ENCODE measurements at regions of chr2 and their contacts with region 1.

Region 1: DNA sequence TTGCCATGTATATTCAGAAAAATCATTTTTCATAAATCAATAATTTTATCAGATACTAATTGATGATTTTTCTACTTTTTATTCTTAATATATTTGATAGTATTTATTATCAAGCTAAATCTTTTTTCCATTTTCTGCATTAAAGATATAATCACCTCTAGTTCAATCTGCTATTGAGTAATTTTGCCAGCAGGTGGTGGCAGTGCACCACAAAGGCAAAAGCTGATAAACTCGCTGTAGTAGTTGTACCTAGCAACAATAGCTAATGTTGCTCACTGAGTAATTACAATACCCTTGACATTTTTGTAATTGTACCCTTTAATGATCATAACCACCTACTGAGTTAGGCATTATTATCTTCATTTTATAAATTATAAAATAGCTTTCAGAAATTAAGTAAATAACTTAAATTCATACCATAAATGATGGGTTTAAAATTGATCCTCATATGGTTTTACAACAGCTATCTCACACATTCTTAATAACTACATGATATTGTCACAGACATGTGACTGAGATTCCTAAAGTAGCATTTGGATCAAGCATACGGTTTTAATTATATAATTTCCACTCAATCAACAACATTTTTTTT is 52.0 kb upstream of the CALCRL start:
- DNase-seq: no peak
- ATAC-seq: no peak
- H3K4me3 Mint-ChIP-seq: no peak overlapping the region
- H3K27ac Mint-ChIP-seq: no peak overlapping the region
- H3K4me1 Mint-ChIP-seq: no peaks in the 10 kb centered on the region
- H3K27me3 Mint-ChIP-seq: no peaks in the 10 kb centered on the region
- CTCF ChIP-seq: no peak

Region 2: DNA sequence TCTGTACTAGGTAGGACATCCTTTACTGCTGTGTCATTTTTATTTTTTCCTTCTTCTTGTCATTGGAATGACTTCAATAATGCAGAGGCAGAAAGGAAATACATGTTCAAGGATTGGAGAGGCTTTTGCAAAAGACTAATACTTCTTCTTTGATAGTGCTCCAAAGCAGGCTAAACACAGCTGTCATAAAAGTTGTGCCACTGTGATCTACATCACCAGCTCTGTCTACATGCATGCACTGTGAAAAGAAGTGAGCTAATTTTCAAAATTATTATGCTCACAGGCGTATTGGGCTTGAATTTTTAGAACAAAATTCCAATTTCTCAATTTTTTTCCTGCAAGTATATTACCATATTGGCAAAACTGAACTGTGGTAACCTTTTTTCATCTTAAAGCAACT is 14.5 kb before region 1 on chr2:
- CTCF ChIA-PET with region 1: no interaction called
- POLR2A ChIA-PET with region 1: no interaction called
- intact Hi-C with region 1: no loop called
- DNase-seq: no peak
- ATAC-seq: no peak
- H3K4me3 Mint-ChIP-seq: no peak overlapping the region
- H3K27ac Mint-ChIP-seq: no peak overlapping the region
- H3K4me1 Mint-ChIP-seq: no peaks in the 10 kb centered on the region
- H3K27me3 Mint-ChIP-seq: no peaks in the 10 kb centered on the region
- CTCF ChIP-seq: no peak

Region 3: GRCh38 chr2:187581125-187581896 is 81.3 kb after region 1 on chr2:
- CTCF ChIA-PET with region 1: interaction called, 4 read pairs
- POLR2A ChIA-PET with region 1: no interaction called
- intact Hi-C with region 1: loop called (anchors 1 kb)
- DNase-seq: no peak
- ATAC-seq: no peak
- H3K4me3 Mint-ChIP-seq: no peak overlapping the region
- H3K27ac Mint-ChIP-seq: no peak overlapping the region
- H3K4me1 Mint-ChIP-seq: no peaks in the 10 kb centered on the region
- H3K27me3 Mint-ChIP-seq: no peaks in the 10 kb centered on the region
- CTCF ChIP-seq: peak; percentile 46

Region 4: DNA sequence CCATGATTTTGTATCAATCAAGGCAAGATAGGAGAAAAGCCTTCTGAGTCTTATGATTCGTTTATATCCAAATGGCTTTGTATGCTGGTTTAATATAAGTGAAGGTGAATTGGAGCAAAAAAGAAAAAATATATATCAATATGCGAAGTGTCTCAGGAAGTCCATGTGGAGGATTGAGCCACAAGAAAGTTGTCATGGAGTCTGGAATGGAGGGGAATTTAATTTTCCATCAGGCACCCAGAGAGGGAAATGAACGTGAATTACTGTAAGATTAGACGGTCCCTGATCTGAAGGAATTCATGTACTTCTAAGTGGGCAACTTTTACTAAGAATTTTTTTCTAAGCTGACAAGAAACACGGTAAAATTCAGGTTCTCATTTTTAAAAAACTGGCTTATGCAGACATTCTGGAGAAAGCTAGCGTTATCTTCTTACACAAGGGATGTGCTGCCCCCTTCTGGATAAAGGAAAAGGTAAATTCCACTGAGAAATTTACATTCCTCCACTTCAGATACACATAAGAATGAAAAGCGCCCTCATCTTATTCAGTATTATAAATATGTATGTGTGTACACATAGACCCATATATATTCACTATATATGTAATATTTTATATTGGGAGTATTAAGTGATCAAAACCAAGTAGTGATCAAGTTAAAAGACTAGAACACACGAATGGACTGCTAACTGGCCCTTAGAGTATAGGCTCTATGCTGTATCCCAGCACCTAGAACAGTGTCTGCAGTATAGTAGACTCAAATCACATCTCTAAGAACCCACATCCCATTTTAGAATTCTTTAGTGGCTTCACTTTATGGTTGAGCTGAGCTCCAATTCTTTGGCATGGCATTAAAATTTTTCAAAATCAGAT is 343.2 kb after region 1 on chr2:
- CTCF ChIA-PET with region 1: no interaction called
- POLR2A ChIA-PET with region 1: no interaction called
- intact Hi-C with region 1: loop called (anchors 2 kb)
- DNase-seq: no peak
- ATAC-seq: no peak
- H3K4me3 Mint-ChIP-seq: no peak overlapping the region
- H3K27ac Mint-ChIP-seq: no peak overlapping the region
- H3K4me1 Mint-ChIP-seq: no peaks in the 10 kb centered on the region
- H3K27me3 Mint-ChIP-seq: no peaks in the 10 kb centered on the region
- CTCF ChIP-seq: no peak

Region 5: GRCh38 chr2:188512456-188512855 is 1012.4 kb after region 1 on chr2:
- CTCF ChIA-PET with region 1: no interaction called
- POLR2A ChIA-PET with region 1: no interaction called
- intact Hi-C with region 1: loop called (anchors 2 kb)
- DNase-seq: no peak
- ATAC-seq: no peak
- H3K4me3 Mint-ChIP-seq: no peak overlapping the region
- H3K27ac Mint-ChIP-seq: no peak overlapping the region
- H3K4me1 Mint-ChIP-seq: no peaks in the 10 kb centered on the region
- H3K27me3 Mint-ChIP-seq: no peaks in the 10 kb centered on the region
- CTCF ChIP-seq: no peak

Measured in activated B cell treated with CpG ODN at 0.5 μM for 24 hours (primary cell).